ENCODE measurements at regions of chr19 and their contacts with region 1.

Region 1: DNA sequence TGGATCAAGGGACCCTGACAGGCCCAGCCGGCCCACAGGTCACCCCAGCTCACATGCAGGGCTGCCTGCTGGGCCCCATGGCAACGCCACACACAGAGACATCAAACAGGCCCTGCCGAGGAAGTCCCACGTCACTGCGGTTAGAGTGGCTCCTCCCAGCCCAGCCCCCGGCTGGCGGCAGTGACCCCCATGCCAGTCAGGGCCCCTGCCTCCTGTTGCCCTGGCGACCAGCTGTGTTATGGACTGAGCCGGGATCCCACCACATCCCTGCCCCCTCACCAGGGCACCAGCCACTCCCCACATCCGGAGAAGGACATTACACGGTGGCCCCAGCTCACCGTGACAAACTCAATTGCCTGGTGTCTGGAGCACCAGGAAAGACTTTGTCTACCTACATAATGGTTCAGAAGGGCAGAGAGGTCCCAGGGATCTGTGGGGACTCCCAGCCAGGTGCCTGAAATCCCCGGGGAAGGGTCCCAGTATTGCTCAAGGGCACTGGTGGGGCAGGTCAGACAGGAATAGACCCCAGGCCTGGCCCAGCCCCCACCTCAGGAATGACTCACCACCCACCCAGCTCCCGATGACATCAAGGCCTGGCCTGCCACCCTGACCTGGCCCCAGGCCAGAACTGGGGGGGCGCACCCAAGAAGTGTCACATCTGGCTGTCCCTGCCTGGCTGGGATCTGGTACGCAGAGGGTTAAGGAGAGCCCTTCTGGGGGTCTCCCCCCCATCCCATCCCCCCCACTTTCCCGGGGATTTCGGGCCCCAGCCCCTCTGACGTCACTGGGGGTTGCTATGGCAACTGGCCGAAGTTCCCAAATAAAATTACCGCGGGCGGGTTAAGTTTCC is 30.2 kb upstream of the NANOS3 start:
- DNase-seq: peak; percentile 90 to 99 (median 97)
- ATAC-seq: peak; percentile 54
- H3K4me3 ChIP-seq: peak overlapping the region; percentile 55 to 68
- H3K4me3 Mint-ChIP-seq: peak overlapping the region; percentile 89
- H3K27ac ChIP-seq: peak overlapping the region; percentile 98 to 99
- H3K27ac Mint-ChIP-seq: peak overlapping the region; percentile 100
- H3K4me1 ChIP-seq: peaks cover 65% of the 10 kb centered on the region
- H3K4me1 Mint-ChIP-seq: peaks cover 56% of the 10 kb centered on the region
- H3K27me3 ChIP-seq: no peaks in the 10 kb centered on the region
- H3K27me3 Mint-ChIP-seq: no peaks in the 10 kb centered on the region
- CTCF ChIP-seq: no peak

Region 2: GRCh38 chr19:13794757-13795589 is 51.8 kb before region 1 on chr19 and contains the start of gene ZSWIM4:
- CTCF ChIA-PET with region 1: no interaction called
- POLR2A ChIA-PET with region 1: interaction called, 11 read pairs
- intact Hi-C with region 1: no loop called
- DNase-seq: peak; percentile 83 to 96 (median 91)
- ATAC-seq: peak; percentile 85
- H3K4me3 ChIP-seq: peak within 1 kb of the TSS; percentile 73 to 80
- H3K4me3 Mint-ChIP-seq: peak within 1 kb of the TSS; percentile 92
- H3K27ac ChIP-seq: peak within 1 kb of the TSS; percentile 51 to 77
- H3K27ac Mint-ChIP-seq: peak within 1 kb of the TSS; percentile 89
- H3K4me1 ChIP-seq: peaks cover 27% of the 10 kb centered on the region
- H3K4me1 Mint-ChIP-seq: peaks cover 38% of the 10 kb centered on the region
- H3K27me3 ChIP-seq: no peaks in the 10 kb centered on the region
- H3K27me3 Mint-ChIP-seq: no peaks in the 10 kb centered on the region
- CTCF ChIP-seq: no peak
- total RNA-seq, gene ZSWIM4: 4.1 to 5.0 TPM

Region 3: DNA sequence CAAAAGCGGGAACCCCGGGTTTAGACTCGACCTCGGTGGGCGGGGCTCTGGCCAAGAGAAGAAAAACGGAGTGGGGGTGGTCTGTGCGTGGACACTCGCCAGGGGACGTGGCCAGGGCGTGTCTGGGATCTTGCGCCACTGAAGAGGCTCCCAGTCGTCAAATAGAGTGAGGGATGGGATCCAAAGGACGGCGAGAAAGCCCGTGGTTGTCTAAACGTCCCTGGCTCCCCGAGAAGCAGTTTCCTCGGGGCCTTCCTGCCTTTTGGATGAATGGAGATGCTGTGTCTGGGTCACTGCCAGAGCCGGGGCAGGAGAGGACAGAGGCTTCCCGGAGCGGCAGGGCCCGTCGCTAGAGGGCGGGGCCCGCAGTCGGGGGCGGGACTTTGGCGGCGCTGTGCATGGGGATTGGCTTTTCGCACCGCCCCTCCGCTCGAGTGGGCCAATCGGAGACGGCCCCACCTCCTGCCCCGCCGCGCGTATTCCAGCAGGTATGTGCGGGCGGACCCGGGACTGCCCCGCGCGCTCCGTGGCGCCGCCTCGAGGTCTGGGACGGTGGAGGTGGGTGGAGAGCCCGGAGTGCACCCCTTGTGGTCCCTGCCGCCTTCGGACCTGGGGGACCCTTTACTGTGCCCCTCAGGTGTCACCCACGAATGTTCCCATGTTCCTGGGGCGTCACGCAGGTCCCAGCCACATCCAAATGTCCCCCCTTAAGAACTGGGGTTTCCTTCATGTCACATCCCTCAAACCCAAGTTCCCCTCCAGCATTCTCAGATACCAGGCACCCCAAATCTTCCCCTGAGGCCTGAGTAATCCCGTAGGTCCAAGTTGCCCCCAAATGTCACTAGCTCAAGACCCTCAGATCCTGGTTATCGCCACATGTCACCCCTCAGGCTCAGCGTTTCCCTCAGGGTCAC is 13.2 kb before region 1 on chr19:
- CTCF ChIA-PET with region 1: interaction called, 3 read pairs
- POLR2A ChIA-PET with region 1: interaction called, 19 read pairs
- intact Hi-C with region 1: loop called in 1 of 2 experiments (anchors 2 kb)
- DNase-seq: peak; percentile 83 to 97 (median 93)
- ATAC-seq: peak; percentile 84
- H3K4me3 ChIP-seq: peak overlapping the region; percentile 64 to 82
- H3K4me3 Mint-ChIP-seq: peak overlapping the region; percentile 86
- H3K27ac ChIP-seq: peak overlapping the region; percentile 53 to 80
- H3K27ac Mint-ChIP-seq: peak overlapping the region; percentile 86
- H3K4me1 ChIP-seq: peaks cover 44% of the 10 kb centered on the region
- H3K4me1 Mint-ChIP-seq: peaks cover 38% of the 10 kb centered on the region
- H3K27me3 ChIP-seq: no peaks in the 10 kb centered on the region
- H3K27me3 Mint-ChIP-seq: no peaks in the 10 kb centered on the region
- CTCF ChIP-seq: peak; percentile 72

Region 4: DNA sequence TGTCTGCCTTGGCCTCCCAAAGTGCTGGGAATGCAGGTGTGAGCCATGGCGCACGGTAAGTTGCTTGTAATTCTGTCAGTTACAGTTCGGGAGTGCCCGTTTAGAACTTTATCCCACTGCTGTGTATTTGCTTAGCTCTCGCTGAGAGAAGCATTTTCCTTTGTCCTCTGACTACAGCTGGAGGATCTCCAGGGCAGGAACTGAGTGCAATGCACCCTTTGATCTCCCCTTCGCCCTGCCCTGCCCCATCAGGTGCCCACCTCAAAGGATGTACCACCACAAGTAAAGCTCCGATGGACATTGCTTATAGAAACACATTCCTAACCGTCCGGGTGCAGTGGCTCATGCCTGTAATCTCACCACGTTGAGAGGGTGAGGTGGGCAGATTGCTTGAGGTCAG is 52.6 kb after region 1 on chr19:
- CTCF ChIA-PET with region 1: no interaction called
- POLR2A ChIA-PET with region 1: no interaction called
- intact Hi-C with region 1: no loop called
- DNase-seq: no peak
- ATAC-seq: no peak
- H3K4me3 ChIP-seq: no peak overlapping the region
- H3K4me3 Mint-ChIP-seq: no peak overlapping the region
- H3K27ac ChIP-seq: no peak overlapping the region
- H3K27ac Mint-ChIP-seq: no peak overlapping the region
- H3K4me1 ChIP-seq: no peaks in the 10 kb centered on the region
- H3K4me1 Mint-ChIP-seq: no peaks in the 10 kb centered on the region
- H3K27me3 ChIP-seq: no peaks in the 10 kb centered on the region
- H3K27me3 Mint-ChIP-seq: no peaks in the 10 kb centered on the region
- CTCF ChIP-seq: no peak

Region 5: DNA sequence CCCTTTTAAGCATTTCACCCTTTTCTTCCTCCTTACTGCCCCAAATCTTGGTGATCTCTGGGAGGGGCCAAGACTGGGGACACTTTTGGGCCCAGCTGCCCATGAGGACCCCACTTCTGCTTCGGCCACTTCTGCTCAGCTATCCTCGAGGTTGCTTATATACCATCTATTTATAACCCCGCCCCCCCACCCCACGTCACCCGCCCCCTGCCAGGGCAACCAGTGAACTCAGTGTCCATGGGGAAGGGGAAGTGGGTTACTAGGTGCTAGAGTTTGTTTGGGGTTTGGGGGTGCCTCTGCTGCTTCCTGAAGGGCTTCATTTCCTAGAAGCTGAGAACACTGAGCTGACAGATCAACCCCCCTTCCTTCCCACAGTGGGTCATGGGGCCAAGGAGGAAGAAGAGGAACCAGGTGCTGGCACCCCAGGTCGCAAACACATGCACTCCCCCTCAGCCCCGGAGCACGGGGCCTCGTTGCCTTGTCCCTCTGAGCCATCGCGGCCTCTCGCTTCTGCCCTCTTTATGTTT is 528.3 kb after region 1 on chr19:
- CTCF ChIA-PET with region 1: no interaction called
- POLR2A ChIA-PET with region 1: no interaction called
- intact Hi-C with region 1: loop called (anchors 2 to 10 kb)
- DNase-seq: peak in 8 of 9 experiments; percentile 69 to 97 (median 78)
- ATAC-seq: peak; percentile 78
- H3K4me3 ChIP-seq: peak overlapping the region; percentile 17 to 18
- H3K4me3 Mint-ChIP-seq: peak overlapping the region; percentile 61
- H3K27ac ChIP-seq: peak overlapping the region; percentile 98 to 100
- H3K27ac Mint-ChIP-seq: peak overlapping the region; percentile 99
- H3K4me1 ChIP-seq: peaks cover 76% of the 10 kb centered on the region
- H3K4me1 Mint-ChIP-seq: peaks cover 65% of the 10 kb centered on the region
- H3K27me3 ChIP-seq: no peaks in the 10 kb centered on the region
- H3K27me3 Mint-ChIP-seq: no peaks in the 10 kb centered on the region
- CTCF ChIP-seq: no peak

Region 6: GRCh38 chr19:14383661-14384555 is 537.1 kb after region 1 on chr19:
- CTCF ChIA-PET with region 1: no interaction called
- POLR2A ChIA-PET with region 1: no interaction called
- intact Hi-C with region 1: loop called in 1 of 2 experiments (anchors 10 kb)
- DNase-seq: peak in 7 of 9 experiments; percentile 52 to 89 (median 73)
- ATAC-seq: peak; percentile 10
- H3K4me3 ChIP-seq: peak overlapping the region; percentile 69 to 82
- H3K4me3 Mint-ChIP-seq: peak overlapping the region; percentile 90
- H3K27ac ChIP-seq: peak overlapping the region; percentile 75 to 97
- H3K27ac Mint-ChIP-seq: peak overlapping the region; percentile 94
- H3K4me1 ChIP-seq: peaks cover 39% of the 10 kb centered on the region
- H3K4me1 Mint-ChIP-seq: peaks cover 41% of the 10 kb centered on the region
- H3K27me3 ChIP-seq: no peaks in the 10 kb centered on the region
- H3K27me3 Mint-ChIP-seq: no peaks in the 10 kb centered on the region
- CTCF ChIP-seq: no peak

Region 7: DNA sequence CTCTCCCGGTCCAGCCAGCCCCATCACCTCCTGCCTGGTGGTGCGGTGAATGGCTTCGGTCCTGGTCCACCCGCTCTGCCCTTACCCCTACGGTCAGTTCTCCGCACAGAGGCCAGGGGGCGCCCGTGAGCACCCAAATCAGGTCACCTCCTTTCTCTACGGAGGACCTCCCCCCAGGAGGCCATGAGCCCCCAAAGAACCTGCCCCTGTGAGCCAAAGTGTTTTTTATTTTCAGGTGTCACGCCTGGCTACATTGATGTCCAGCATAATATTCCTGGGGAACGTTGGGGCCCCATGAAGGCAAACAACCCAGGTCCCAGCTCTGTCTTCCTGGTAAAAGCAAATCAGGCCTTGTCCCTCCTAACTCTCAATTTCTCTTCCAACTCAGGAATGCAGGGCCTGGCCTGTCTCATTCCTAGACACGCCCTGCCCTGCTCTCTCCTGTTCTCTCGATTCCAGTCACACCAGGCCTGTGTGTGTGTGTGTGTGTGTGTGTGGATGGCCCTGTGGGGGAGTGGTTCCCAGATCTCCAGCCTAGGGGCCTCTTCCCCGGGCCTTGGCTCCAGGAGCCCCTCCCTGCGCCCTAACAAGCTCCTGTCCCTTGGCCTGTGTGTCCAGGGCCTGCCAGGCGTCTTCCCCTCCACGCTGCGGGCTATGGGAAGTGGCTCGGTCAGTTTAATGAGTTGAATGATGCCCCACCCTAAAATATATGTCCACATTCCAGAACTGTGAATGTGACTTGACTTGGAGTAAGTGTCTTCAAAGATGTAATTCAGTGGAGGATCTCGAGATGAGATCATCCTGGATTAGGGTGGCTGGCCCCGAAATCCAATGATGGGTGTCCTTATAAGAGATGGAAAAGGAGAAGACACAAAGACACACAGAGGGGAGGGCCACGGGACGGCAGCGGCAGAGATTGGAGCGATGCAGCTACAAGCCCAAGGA is 659.0 kb after region 1 on chr19:
- CTCF ChIA-PET with region 1: no interaction called
- POLR2A ChIA-PET with region 1: no interaction called
- intact Hi-C with region 1: no loop called
- DNase-seq: peak; percentile 50 to 87 (median 76)
- ATAC-seq: peak; percentile 51
- H3K4me3 ChIP-seq: peak overlapping the region in 1 of 2 experiments; percentile 25
- H3K4me3 Mint-ChIP-seq: peak overlapping the region; percentile 56
- H3K27ac ChIP-seq: peak overlapping the region; percentile 62 to 76
- H3K27ac Mint-ChIP-seq: peak overlapping the region; percentile 96
- H3K4me1 ChIP-seq: peaks cover 49% of the 10 kb centered on the region
- H3K4me1 Mint-ChIP-seq: peaks cover 64% of the 10 kb centered on the region
- H3K27me3 ChIP-seq: no peaks in the 10 kb centered on the region
- H3K27me3 Mint-ChIP-seq: no peaks in the 10 kb centered on the region
- CTCF ChIP-seq: peak; percentile 82

Region 8: DNA sequence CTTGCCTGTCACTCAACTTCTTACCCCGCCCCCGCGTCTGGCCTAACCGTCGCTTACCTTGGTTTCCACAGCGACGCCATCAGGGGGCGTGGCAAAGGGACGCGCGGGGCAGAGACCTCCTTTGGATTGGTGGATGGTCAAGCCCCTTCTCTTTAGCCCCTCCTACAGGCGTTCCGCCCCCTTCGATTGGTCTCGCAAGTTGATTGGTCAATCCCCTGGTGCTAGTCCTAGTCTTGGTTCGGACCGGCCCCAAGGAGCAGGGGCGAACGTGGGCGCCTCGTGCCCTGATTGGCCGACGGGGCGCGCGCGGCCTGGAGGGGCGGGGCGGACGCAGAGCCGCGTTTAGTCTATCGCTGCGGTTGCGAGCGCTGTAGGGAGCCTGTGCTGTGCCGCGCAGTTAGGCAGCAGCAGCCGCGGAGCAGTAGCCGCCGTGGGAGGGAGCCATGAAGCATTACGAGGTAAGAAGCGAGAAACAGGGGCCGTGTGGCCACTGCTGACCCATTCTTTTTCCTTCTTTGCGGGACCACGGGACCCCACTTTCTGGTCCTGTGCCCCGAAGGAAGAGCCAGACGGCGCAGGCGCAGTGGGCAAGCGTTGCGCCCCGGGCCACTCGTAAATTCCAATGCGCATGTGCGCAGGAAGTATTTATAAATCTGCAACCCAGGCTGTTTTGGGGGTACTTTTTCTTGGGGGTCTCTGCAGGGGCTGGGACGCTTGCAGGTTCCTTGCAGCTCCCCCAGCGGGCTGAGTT is 682.6 kb after region 1 on chr19 and contains the start of gene TECR:
- CTCF ChIA-PET with region 1: no interaction called
- POLR2A ChIA-PET with region 1: no interaction called
- intact Hi-C with region 1: loop called in 1 of 2 experiments (anchors 10 kb)
- DNase-seq: peak; percentile 100
- ATAC-seq: peak; percentile 93
- H3K4me3 ChIP-seq: peak within 1 kb of the TSS; percentile 85 to 97
- H3K4me3 Mint-ChIP-seq: peak within 1 kb of the TSS; percentile 97
- H3K27ac ChIP-seq: peak within 1 kb of the TSS; percentile 88 to 89
- H3K27ac Mint-ChIP-seq: peak within 1 kb of the TSS; percentile 98
- H3K4me1 ChIP-seq: peaks cover 28% of the 10 kb centered on the region
- H3K4me1 Mint-ChIP-seq: peaks cover 54% of the 10 kb centered on the region
- H3K27me3 ChIP-seq: no peaks in the 10 kb centered on the region
- H3K27me3 Mint-ChIP-seq: no peaks in the 10 kb centered on the region
- CTCF ChIP-seq: no peak
- total RNA-seq, gene TECR: 300 to 325 TPM